ENCODE measurements at regions of chr14 and their contacts with region 1.

Region 1: GRCh38 chr14:99918781-99919180 is 125.6 kb downstream of the EML1 start:
- DNase-seq: no peak
- H3K4me3 ChIP-seq: no peak overlapping the region
- CTCF ChIP-seq: no peak

Region 2: DNA sequence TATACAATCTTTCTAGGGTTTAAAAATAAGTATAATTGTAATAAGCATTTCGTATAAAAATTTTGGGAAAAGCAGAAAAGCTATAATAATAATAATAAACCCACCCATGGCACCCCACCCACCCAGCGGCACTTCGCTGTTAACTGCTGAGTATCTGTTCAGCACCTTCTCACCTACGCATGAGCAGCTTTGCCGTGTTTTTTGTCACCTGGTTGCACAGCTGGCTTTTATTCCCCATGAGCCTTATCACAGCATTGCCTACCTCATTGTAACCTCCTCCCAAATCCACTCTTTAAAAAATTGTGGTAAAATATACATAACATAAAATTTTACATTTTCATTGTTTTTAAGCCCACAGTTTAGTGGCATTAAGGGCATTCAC is 200.0 kb before region 1 on chr14:
- in situ Hi-C with region 1: no loop called
- DNase-seq: no peak
- H3K4me3 ChIP-seq: no peak overlapping the region
- CTCF ChIP-seq: no peak

Region 3: GRCh38 chr14:99831903-99832685 is 86.7 kb before region 1 on chr14:
- in situ Hi-C with region 1: loop called (anchors 5 kb)
- DNase-seq: no peak
- H3K4me3 ChIP-seq: no peak overlapping the region
- CTCF ChIP-seq: no peak

Region 4: GRCh38 chr14:99961826-99962666 is 43.3 kb after region 1 on chr14:
- in situ Hi-C with region 1: no loop called
- DNase-seq: no peak
- H3K4me3 ChIP-seq: no peak overlapping the region
- CTCF ChIP-seq: no peak

Measured in astrocyte of the cerebellum (primary cell).